Transverse colon (tissue), 4 donors: ENCODE measurements at regions of chr4 and their contacts with region 1.

Region 1: DNA sequence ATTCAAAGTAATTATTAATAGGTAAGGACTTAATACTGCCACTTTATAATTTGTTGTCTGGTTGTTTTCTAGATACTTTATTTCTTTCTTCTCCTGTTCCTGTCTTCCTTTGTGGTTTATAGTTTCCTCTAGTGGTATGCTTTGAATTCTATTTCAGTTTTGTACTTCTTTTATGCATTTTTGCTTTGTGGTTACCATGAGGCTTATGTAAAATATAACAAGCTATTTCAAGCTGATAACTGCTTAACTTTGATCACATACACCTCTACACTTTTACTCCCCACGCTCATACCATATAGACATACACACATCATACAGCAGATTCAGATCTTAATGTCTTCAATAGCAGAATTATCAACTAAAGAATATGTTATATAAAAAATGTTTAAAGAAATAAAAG is 192.3 kb downstream of the SCFD2 start:
- DNase-seq: no peak
- H3K4me3 ChIP-seq: no peak overlapping the region
- H3K27ac ChIP-seq: no peak overlapping the region
- H3K4me1 ChIP-seq: peaks cover 0 to 4% (median 0%) of the 10 kb centered on the region in 4 donors
- H3K27me3 ChIP-seq: no peaks in the 10 kb centered on the region
- CTCF ChIP-seq: no peak
- EP300 ChIP-seq: no peak
- POLR2A ChIP-seq: no peak

Region 2: DNA sequence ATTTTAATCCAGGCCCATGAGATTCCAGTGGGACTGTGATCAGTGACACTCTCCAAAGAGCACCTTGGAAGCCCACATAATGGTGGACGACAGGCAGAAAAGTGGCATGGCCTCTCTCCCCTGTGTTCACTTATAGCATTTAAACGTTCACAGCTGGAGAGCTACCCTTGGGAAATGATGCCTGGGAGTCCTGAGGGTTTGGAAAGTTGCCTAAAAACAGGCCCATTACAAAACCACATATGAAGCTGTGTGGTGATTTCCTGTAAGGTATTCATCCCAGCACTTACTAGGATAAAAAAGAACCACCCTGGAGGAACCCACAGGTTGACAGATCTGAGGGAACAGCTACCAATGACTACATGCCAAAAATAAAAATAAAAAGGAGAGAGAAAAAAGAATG is 118.3 kb before region 1 on chr4:
- in situ Hi-C with region 1: no loop called
- intact Hi-C with region 1: no loop called
- DNase-seq: no peak
- H3K4me3 ChIP-seq: no peak overlapping the region
- H3K27ac ChIP-seq: no peak overlapping the region
- H3K4me1 ChIP-seq: no peaks in the 10 kb centered on the region
- H3K27me3 ChIP-seq: no peaks in the 10 kb centered on the region
- CTCF ChIP-seq: no peak
- EP300 ChIP-seq: no peak
- POLR2A ChIP-seq: no peak

Region 3: DNA sequence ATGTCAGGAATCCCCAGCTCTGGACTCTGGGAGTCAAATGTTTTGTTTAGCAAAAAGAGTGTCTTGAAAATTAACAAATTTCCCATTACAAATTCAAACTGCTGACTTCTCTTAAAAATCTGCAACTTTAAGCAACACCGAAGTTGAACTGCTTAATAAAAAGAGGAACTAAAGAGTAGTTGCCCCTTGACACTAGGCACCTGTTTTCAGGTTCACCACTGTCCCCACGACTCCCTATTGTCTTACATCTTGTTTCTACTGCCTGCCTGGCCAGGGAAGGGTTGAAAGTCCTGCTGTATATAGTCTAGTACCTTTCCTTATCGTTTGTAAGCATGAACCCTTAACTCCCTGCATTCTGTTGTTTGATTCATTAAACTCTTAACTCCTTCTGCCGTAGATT is 18.4 kb after region 1 on chr4:
- in situ Hi-C with region 1: no loop called
- intact Hi-C with region 1: loop called (anchors 2 kb)
- DNase-seq: no peak
- H3K4me3 ChIP-seq: no peak overlapping the region
- H3K27ac ChIP-seq: no peak overlapping the region
- H3K4me1 ChIP-seq: peaks cover 0 to 19% (median 13%) of the 10 kb centered on the region in 4 donors
- H3K27me3 ChIP-seq: no peaks in the 10 kb centered on the region
- CTCF ChIP-seq: no peak
- EP300 ChIP-seq: no peak
- POLR2A ChIP-seq: no peak